ENCODE measurements at regions of chr22 and their contacts with region 1.

Region 1: GRCh38 chr22:29766632-29767170 is at the start of gene ZMAT5:
- DNase-seq: peak; percentile 91 to 95
- ATAC-seq: peak; percentile 96 to 99 (median 99)
- H3K4me3 ChIP-seq: peak within 1 kb of the TSS; percentile 54 to 97 (median 86)
- H3K27ac ChIP-seq: peak within 1 kb of the TSS; percentile 89 to 97 (median 94)
- H3K4me1 ChIP-seq: peaks cover 6 to 45% (median 31%) of the 10 kb centered on the region in 9 donors
- H3K27me3 ChIP-seq: no peaks in the 10 kb centered on the region
- CTCF ChIP-seq: no peak
- total RNA-seq, gene ZMAT5: 15.1 to 23.9 (median 19.3) TPM

Region 2: DNA sequence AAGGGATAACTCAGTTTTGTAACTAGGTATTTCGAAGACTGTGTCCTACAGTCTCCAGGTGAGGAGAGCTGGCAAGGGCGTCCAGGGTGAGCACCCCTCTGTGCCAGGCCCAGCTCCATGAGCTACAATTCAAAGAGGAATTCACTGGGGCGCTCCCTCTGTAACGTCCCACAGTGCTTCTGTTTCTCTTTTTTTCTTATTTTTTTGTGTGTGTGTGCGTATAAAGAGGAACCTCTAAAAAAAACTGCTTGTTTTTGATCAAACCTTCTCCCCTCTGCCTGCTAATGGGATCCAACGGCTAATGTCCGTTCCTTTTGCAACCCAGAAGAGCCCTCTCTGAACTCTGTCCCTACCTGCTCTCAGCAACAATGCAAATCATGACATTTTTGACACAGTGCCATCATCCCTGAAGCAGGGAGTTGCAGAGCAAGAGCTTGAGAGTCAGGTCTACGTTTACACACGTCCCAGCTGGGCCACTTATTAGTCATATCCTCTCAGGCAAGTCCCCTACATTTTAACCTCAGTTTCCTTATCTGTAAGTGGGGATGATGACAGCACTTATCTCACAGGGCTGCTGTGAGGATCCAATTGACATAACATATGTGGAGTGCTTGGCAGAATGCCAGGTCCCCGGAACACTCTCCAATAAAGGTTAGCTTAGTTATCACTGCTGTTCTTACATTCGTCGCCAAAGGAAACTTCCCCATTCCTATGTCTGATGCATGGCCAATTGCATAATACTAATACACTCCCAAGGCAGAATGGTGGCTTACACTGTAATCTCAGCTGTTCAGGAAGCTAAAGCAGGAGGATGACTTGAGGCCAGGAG is 54.5 kb after region 1 on chr22:
- intact Hi-C with region 1: loop called in 1 of 10 experiments (anchors 5 kb)
- DNase-seq: peak; percentile 81 to 83
- ATAC-seq: peak; percentile 77 to 96 (median 86)
- H3K4me3 ChIP-seq: no peak overlapping the region
- H3K27ac ChIP-seq: peak overlapping the region in 9 of 10 donors; percentile 29 to 74 (median 53)
- H3K4me1 ChIP-seq: peaks cover 16 to 42% (median 35%) of the 10 kb centered on the region in 9 donors
- H3K27me3 ChIP-seq: no peaks in the 10 kb centered on the region
- CTCF ChIP-seq: no peak